Right cardiac atrium (tissue), 5 donors: ENCODE measurements at regions of chrX and their contacts with region 1.

Region 1: DNA sequence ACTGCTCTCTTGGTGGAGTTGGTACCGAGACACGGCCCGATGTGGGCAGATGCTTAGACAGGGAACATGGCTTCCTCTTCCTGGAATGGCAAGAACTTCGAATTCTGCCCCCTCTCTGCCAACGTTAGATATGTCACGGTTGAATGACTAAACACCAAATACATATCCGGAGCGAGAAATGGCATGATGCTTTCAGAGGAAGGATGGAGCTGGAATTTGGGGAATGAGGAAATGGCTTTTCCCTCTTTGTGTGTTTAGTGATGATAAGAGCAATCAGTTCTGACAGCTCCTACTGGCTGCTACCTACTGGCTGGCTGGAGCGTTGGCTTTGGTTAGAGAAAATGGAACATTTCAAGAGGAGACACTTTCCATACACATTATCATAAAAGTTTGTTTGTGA is 140.0 kb downstream of the DHRSX start:
- DNase-seq: no peak
- ATAC-seq: no peak
- H3K4me3 ChIP-seq: no peak overlapping the region
- H3K27ac ChIP-seq: no peak overlapping the region
- H3K4me1 ChIP-seq: no peaks in the 10 kb centered on the region
- H3K27me3 ChIP-seq: no peaks in the 10 kb centered on the region

Region 2: GRCh38 chrX:2172359-2172758 is 188.4 kb before region 1 on chrX:
- intact Hi-C with region 1: no loop called
- DNase-seq: no peak
- ATAC-seq: no peak
- H3K4me3 ChIP-seq: no peak overlapping the region
- H3K27ac ChIP-seq: no peak overlapping the region
- H3K4me1 ChIP-seq: no peaks in the 10 kb centered on the region
- H3K27me3 ChIP-seq: no peaks in the 10 kb centered on the region

Region 3: GRCh38 chrX:2391869-2392606 is 31.3 kb after region 1 on chrX:
- intact Hi-C with region 1: loop called in 1 of 4 experiments (anchors 2 kb)
- DNase-seq: no peak
- ATAC-seq: no peak
- H3K4me3 ChIP-seq: no peak overlapping the region
- H3K27ac ChIP-seq: no peak overlapping the region
- H3K4me1 ChIP-seq: peaks cover 5% of the 10 kb centered on the region
- H3K27me3 ChIP-seq: no peaks in the 10 kb centered on the region

Region 4: DNA sequence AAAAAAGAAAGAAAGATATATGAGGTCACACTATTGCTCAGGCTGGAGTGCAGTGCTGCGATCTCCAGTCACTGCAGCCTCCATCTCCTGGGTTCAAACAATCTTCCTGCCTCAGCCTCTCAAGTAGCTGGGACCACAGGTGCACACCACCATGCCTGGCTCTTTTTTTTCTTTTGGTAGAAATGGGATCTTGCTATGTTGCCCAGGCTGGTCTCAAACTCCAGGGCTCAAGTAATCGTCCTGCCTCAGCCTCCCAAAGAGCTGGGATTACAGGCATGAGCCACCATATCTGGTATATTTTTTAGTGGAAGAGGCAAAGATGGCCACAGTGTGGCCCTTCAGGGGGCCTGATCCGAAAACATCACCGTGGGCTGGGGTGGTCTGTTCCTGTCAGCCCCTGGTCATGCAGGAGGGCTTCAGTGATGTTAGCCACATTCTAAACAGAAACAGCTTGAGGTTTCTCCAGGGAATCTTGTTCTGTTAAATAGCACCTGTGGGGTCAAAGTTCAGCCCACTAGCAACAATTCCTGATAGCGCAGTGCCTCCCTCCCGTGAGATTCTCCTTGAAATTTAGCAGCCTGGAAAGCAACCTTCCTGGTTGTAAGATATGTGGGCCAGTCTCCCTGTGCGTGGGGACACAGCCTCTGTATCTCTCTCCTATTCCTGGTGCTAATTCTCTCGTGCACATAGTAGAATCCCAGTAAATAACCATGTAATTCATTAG is 147.3 kb after region 1 on chrX:
- intact Hi-C with region 1: no loop called
- DNase-seq: no peak
- ATAC-seq: no peak
- H3K4me3 ChIP-seq: no peak overlapping the region
- H3K27ac ChIP-seq: no peak overlapping the region
- H3K4me1 ChIP-seq: no peaks in the 10 kb centered on the region
- H3K27me3 ChIP-seq: no peaks in the 10 kb centered on the region